ENCODE measurements at regions of chr22 and their contacts with region 1.

Region 1: DNA sequence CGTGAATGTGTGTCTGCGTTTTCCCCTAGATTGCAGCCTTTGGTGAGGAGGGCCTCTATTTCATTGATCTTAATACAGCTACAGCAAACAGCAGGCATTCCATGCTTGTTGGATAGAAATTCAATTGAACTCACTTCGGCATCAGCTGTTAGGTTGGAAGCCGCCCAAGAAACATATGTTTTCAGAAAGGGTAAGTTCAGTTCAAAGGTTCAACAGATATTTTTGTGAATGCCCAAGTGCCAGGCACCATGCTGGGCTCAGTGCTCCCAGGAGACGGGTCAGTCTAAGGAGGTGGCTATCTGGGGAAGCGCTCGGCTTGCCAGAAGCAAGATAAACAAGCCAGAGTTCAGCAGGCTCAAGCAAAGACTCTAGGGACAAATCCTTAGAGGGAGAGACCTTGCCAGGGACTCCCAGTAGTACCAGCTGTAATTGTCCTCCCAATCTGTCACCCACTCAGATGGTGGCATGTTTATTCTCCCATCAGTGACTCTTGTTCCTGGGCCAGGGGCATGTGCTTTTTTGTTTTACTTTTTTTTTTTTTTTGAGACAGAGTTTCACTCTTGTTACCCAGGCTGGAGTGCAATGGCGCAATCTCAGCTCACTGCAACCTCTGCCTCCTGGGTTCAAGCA is 64.5 kb upstream of the LARGE1 start:
- DNase-seq: no peak
- H3K27ac ChIP-seq: no peak overlapping the region
- CTCF ChIP-seq: no peak

Region 2: DNA sequence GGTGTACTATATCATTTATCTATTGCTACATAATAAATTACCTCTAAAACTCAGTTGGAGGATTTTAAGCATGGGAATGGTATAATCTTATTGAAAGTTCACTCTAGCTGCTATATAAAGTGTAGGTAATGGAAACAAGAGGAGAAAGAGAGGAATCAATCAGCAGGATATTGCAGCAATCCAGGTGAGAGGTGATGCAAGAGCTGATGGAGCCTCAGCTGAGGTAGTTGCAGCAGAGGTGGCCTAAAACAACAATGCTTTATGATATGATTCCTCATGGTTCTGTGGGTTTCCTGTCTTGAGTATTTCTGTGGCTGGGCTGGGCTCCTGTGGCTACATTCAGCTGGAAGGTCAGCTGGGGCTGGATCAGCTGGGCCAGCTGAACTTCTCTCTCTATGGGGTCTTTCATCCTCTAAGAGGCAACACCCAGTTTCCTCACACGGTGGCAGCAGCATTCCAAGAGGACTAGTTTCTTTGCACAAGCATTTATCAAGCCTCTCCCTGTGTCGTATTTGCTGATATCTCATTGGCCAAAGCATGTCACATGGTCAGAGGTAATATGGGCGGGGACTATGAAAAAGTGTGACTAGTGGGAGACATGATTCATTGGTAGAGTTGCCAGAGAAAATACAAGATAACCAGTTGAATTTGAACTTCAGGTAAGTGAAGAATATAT is 70.9 kb after region 1 on chr22:
- CTCF ChIA-PET with region 1: interaction called, 11 read pairs
- POLR2A ChIA-PET with region 1: no interaction called
- DNase-seq: no peak
- H3K27ac ChIP-seq: no peak overlapping the region
- CTCF ChIP-seq: no peak